Left cardiac atrium (tissue), 4 donors: ENCODE measurements at regions of chr19 and their contacts with region 1.

Region 1: DNA sequence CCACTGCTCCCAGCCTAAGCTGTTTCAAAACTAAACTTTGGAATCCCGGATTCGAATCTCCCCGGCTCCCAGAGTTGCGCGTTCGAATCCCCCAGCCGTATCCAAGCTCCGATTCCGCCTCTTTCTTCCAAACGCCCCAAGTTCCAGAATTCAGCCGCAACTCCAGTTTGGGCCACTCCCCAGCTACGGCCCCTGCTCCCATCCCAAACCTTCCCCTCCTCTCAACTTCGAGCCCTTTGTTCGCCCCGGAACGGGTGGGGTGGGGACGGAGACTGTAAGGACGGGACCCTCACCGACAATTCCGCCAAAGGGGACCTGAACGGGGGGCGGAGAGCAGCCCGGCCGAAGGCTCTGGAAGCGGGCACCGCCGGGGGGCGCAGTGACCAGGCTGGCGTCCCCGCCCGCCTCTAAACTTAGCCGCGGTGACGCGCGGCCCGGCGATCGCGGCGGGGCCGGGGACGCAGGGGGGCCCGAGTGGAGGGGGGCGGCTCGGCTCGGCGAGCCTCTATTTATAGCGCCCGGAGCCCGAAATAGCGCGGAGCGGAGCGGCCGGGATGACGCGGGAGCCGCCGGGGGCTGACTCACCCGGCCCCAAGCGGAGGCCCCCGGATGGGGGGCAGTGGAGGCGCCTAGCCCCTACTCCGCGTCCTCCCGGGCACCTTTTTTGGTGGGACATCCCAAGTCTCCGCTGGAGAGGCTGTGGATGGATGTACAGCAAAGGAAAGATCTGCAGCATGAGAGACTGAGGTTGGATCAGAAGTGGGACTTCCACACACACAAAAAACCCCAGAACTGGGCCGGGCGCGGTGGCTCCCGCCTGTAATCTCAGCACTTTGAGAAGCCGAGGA is 4.9 kb upstream of the ERCC1 start:
- DNase-seq: peak; percentile 82
- ATAC-seq: peak; percentile 58 to 74

Region 2: GRCh38 chr19:45370410-45371204 is 58.0 kb before region 1 on chr19 and contains the start of gene ERCC2:
- intact Hi-C with region 1: no loop called
- DNase-seq: peak; percentile 99
- ATAC-seq: peak; percentile 99 to 100
- total RNA-seq, gene ERCC2: 12.7 to 13.0 TPM

Region 3: DNA sequence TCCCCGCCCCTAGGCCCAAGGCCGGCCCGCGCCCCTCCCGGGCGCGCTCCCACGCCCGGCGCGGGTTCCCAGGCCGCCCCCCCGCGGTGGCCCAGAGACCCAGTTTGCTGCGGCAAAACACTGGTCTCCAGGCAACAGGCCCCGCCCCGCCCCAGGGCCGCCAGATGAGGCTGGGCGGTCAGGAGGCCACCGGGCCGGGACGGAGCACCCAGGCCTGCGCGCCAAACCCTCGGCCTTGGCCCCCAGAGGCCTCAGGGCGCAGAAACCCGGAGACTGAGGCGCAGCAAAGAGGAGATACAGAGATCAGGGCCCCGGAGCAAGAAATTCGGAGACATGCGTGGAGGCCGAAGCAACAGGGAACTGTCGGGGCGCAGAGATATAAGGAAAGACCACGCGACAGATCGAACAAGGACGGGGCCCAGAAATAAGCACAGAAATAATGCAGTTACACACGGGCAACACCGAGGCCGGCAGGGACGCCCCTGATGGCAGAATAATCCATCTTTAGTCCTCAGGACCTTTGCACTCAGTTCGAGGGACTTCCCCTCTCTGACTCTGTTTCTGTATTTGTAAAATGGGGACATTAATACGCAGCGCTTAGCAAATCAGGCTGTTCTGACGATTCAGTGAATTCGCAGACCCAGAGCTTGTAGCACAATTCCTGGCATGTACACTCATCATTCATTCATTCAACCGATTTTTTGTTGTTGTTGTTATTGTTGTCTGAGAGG is 15.9 kb after region 1 on chr19:
- intact Hi-C with region 1: no loop called
- DNase-seq: peak; percentile 96
- ATAC-seq: peak; percentile 77 to 80

Region 4: GRCh38 chr19:45478454-45479238 is 50.0 kb after region 1 on chr19:
- intact Hi-C with region 1: loop called in 1 of 2 experiments (anchors 2 kb)
- DNase-seq: peak; percentile 81
- ATAC-seq: peak; percentile 93 to 94